ENCODE measurements at regions of chr11 and their contacts with region 1.

Region 1: GRCh38 chr11:45771566-45772448 is 33.1 kb upstream of the SLC35C1 start:
- DNase-seq: peak; percentile 91 to 96
- ATAC-seq: peak; percentile 96
- H3K4me3 ChIP-seq: peak overlapping the region; percentile 29 to 48
- H3K27ac ChIP-seq: peak overlapping the region; percentile 6 to 22
- H3K4me1 ChIP-seq: no peaks in the 10 kb centered on the region
- H3K27me3 ChIP-seq: no peaks in the 10 kb centered on the region

Region 2: DNA sequence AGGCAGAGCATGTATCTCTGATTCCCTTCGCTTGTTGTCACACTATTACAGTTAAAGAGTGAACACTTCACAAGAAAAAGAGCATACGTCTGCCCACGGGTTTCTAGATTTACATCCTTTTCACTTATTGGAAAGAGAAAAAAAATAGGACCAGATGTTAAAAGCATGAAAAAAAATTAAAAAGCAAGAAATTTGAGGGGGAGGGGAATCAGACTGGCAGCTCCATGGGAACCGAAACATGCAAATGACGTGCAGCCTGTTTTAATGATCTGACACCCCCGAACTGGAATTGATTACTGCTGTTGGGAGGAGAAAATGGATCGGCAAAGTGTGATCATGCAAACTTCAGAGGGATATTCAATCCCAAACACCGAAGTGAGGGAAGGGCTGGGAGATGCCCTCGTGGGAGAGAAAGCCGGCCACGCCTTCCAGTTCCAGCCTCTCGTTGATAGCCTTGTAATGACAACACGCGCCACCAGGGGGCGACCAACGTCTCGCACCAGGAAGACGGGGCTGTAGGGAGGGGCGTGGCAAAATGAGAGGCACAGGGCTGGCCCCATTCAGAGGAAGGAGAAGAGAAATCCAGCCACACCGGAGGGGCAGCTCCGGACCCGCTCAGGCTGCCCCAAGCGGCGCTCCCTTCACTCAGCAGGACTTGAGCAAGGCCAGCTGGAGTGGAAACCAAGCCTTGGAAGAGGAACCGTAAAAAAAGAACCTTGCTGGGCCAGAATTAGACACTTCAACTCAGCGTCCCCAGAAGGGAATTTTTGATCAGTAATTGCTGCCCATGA is 431.9 kb before region 1 on chr11:
- intact Hi-C with region 1: loop called in 1 of 2 experiments (anchors 1 kb)
- DNase-seq: peak; percentile 97 to 99
- ATAC-seq: peak; percentile 94
- H3K4me3 ChIP-seq: no peak overlapping the region
- H3K27ac ChIP-seq: no peak overlapping the region
- H3K4me1 ChIP-seq: no peaks in the 10 kb centered on the region
- H3K27me3 ChIP-seq: no peaks in the 10 kb centered on the region

Region 3: DNA sequence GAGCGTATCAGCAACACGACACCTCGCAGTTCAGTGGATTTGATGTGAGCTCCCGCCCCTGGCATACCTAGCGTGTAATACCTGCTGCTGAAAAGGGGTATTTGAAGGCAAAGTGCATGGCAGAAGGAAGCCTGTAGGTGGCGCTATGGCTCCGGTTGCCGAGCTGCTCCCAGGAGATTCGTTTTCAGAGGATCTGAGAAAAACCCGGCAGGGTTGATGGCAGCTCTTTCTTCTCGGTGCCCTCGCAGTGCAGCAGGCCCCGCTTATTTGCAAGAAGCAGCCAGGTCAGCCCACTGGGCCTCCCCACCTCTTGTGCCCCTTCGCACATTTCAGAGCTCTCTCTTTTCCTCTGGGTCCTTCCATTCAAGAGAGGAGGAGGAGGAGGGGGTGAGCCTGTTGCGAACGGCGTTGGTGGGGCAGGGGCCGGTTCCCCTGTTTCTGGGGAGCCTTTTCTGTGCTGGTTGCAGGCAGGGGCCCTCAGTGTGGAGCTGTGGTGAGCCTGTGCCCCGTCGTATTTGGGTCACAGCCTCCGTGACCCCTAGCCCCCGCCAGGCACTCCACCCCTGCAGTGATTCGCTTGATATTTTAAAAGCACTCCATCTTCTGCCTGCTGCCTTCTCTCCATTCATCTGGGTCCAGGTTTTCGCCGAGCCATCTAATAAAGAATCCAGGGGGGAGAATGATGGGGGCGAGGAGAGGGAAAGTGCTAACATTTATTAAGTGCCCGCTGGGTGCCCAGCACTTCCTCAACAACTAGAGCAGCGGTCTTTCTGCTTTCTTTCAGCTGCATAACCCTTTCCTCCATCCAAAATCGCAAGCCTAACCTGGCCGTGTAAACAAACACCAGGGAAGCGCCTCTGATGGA is 400.3 kb before region 1 on chr11:
- intact Hi-C with region 1: loop called (anchors 2 kb)
- DNase-seq: peak; percentile 75 to 84
- ATAC-seq: no peak
- H3K4me3 ChIP-seq: no peak overlapping the region
- H3K27ac ChIP-seq: no peak overlapping the region
- H3K4me1 ChIP-seq: no peaks in the 10 kb centered on the region
- H3K27me3 ChIP-seq: no peaks in the 10 kb centered on the region

Region 4: GRCh38 chr11:45532546-45532945 is 239.3 kb before region 1 on chr11:
- intact Hi-C with region 1: loop called in 1 of 2 experiments (anchors 5 kb)
- DNase-seq: no peak
- ATAC-seq: no peak
- H3K4me3 ChIP-seq: no peak overlapping the region
- H3K27ac ChIP-seq: no peak overlapping the region
- H3K4me1 ChIP-seq: no peaks in the 10 kb centered on the region
- H3K27me3 ChIP-seq: no peaks in the 10 kb centered on the region

Region 5: DNA sequence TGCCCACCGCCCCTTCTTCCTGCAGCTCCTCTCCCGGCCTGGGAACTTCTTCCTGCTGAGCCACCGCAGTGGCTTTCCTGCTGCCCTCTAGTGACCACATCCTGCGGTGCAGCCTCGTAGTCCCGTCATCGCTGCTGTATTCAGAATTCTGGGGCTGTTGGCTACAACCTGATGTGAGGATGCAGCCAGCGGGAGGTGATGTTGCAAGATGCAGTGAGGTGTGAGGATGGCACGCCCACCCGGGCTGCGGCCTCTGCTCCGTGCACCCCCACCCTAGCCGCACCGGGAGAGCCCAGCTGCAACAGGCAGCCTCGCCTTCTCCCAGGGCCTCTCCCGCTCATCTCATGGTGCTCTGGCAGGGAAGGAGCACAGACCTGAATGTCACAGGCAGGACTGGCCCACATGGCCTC is 116.5 kb before region 1 on chr11:
- intact Hi-C with region 1: loop called (anchors 2 to 5 kb)
- DNase-seq: peak; percentile 83 to 92
- ATAC-seq: peak; percentile 82
- H3K4me3 ChIP-seq: no peak overlapping the region
- H3K27ac ChIP-seq: no peak overlapping the region
- H3K4me1 ChIP-seq: no peaks in the 10 kb centered on the region
- H3K27me3 ChIP-seq: no peaks in the 10 kb centered on the region

Measured in aorta (tissue), 5 donors.